Caco-2 (cell line): ENCODE measurements at regions of chr6 and their contacts with region 1.

Region 1: GRCh38 chr6:37691904-37692806 is 5.5 kb downstream of the MDGA1 start:
- DNase-seq: peak; percentile 77 to 87
- H3K4me3 ChIP-seq: no peak overlapping the region
- H3K4me3 Mint-ChIP-seq: no peak overlapping the region
- H3K27ac Mint-ChIP-seq: no peak overlapping the region
- H3K4me1 ChIP-seq: peaks cover 16% of the 10 kb centered on the region
- H3K4me1 Mint-ChIP-seq: no peaks in the 10 kb centered on the region
- H3K27me3 ChIP-seq: peaks cover 8% of the 10 kb centered on the region
- H3K27me3 Mint-ChIP-seq: peaks cover 22% of the 10 kb centered on the region
- CTCF ChIP-seq: peak; percentile 95 to 98

Region 2: DNA sequence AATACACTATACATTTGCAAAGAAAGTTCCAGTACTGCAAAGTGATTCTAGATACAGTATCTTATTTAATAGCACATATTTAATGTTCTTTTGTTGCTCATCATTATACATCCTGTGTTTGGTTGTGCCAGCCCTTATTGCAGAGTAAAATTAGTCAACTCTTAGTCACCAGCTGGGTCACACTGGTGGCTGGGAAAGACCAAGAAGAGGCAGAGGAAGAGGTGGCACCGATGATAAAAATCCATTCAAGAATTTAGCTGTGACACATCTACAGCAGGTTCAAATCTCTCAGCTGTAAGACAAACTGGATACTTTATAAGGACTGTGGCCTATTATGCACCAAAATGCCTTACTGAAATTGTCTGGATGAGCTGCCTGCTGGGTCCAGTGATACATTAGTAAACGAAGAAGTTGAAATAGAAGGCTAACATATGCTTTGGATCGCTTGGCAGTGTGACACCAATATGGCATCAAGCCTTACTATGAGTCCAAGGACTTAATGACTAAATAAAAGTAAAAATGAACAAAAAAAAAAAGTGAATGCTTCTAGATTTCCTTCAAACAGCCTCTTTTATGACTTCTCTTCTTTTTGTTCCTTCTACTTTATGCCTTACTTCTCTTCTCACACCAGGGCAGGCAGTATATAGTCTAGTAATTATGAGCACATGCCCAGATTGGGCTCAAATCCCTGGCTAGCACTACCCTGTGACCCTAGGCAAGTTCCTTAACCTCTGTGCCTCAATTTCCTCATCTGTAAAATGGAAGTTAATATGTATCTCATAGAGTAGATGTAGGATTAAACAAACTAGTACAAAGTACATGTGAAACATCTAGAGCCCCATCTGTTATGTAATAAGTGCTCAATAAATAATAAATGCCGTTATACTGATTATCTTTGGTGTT is 367.8 kb before region 1 on chr6:
- CTCF ChIA-PET with region 1: no interaction called
- POLR2A ChIA-PET with region 1: no interaction called
- intact Hi-C with region 1: loop called (anchors 1 kb)
- DNase-seq: no peak
- H3K4me3 ChIP-seq: no peak overlapping the region
- H3K4me3 Mint-ChIP-seq: no peak overlapping the region
- H3K27ac Mint-ChIP-seq: no peak overlapping the region
- H3K4me1 ChIP-seq: peaks cover 15% of the 10 kb centered on the region
- H3K4me1 Mint-ChIP-seq: peaks cover 13% of the 10 kb centered on the region
- H3K27me3 ChIP-seq: no peaks in the 10 kb centered on the region
- H3K27me3 Mint-ChIP-seq: no peaks in the 10 kb centered on the region
- CTCF ChIP-seq: no peak

Region 3: GRCh38 chr6:37483917-37484785 is 208.0 kb before region 1 on chr6:
- CTCF ChIA-PET with region 1: no interaction called
- POLR2A ChIA-PET with region 1: no interaction called
- intact Hi-C with region 1: loop called (anchors 1 kb)
- DNase-seq: peak; percentile 61 to 80
- H3K4me3 ChIP-seq: no peak overlapping the region
- H3K4me3 Mint-ChIP-seq: no peak overlapping the region
- H3K27ac Mint-ChIP-seq: no peak overlapping the region
- H3K4me1 ChIP-seq: no peaks in the 10 kb centered on the region
- H3K4me1 Mint-ChIP-seq: no peaks in the 10 kb centered on the region
- H3K27me3 ChIP-seq: no peaks in the 10 kb centered on the region
- H3K27me3 Mint-ChIP-seq: no peaks in the 10 kb centered on the region
- CTCF ChIP-seq: peak; percentile 87 to 94

Region 4: GRCh38 chr6:37566111-37566949 is 125.8 kb before region 1 on chr6:
- CTCF ChIA-PET with region 1: interaction called, 13 read pairs
- POLR2A ChIA-PET with region 1: no interaction called
- intact Hi-C with region 1: no loop called
- DNase-seq: peak; percentile 47 to 80
- H3K4me3 ChIP-seq: peak overlapping the region; percentile 30
- H3K4me3 Mint-ChIP-seq: peak overlapping the region; percentile 64
- H3K27ac Mint-ChIP-seq: no peak overlapping the region
- H3K4me1 ChIP-seq: peaks cover 6% of the 10 kb centered on the region; the same call in 1 of the 2 replicates
- H3K4me1 Mint-ChIP-seq: peaks cover 8% of the 10 kb centered on the region
- H3K27me3 ChIP-seq: no peaks in the 10 kb centered on the region
- H3K27me3 Mint-ChIP-seq: no peaks in the 10 kb centered on the region
- CTCF ChIP-seq: peak; percentile 77 to 86

Region 5: GRCh38 chr6:37607944-37608343 is 84.2 kb before region 1 on chr6:
- CTCF ChIA-PET with region 1: interaction called, 11 read pairs
- POLR2A ChIA-PET with region 1: no interaction called
- intact Hi-C with region 1: loop called (anchors 1 kb)
- DNase-seq: peak in 1 of 2 experiments; percentile 29
- H3K4me3 ChIP-seq: no peak overlapping the region
- H3K4me3 Mint-ChIP-seq: no peak overlapping the region
- H3K27ac Mint-ChIP-seq: no peak overlapping the region
- H3K4me1 ChIP-seq: no peaks in the 10 kb centered on the region
- H3K4me1 Mint-ChIP-seq: no peaks in the 10 kb centered on the region
- H3K27me3 ChIP-seq: no peaks in the 10 kb centered on the region
- H3K27me3 Mint-ChIP-seq: peaks cover 3% of the 10 kb centered on the region
- CTCF ChIP-seq: peak in 1 of 2 experiments; percentile 69

Region 6: GRCh38 chr6:37643851-37644672 is 48.1 kb before region 1 on chr6:
- CTCF ChIA-PET with region 1: no interaction called
- POLR2A ChIA-PET with region 1: no interaction called
- intact Hi-C with region 1: no loop called
- DNase-seq: peak in 1 of 2 experiments; percentile 16
- H3K4me3 ChIP-seq: no peak overlapping the region
- H3K4me3 Mint-ChIP-seq: no peak overlapping the region
- H3K27ac Mint-ChIP-seq: no peak overlapping the region
- H3K4me1 ChIP-seq: no peaks in the 10 kb centered on the region
- H3K4me1 Mint-ChIP-seq: no peaks in the 10 kb centered on the region
- H3K27me3 ChIP-seq: no peaks in the 10 kb centered on the region
- H3K27me3 Mint-ChIP-seq: peaks cover 4% of the 10 kb centered on the region
- CTCF ChIP-seq: no peak